SK-N-SH (cell line): ENCODE measurements at regions of chr18 and their contacts with region 1.

Region 1: DNA sequence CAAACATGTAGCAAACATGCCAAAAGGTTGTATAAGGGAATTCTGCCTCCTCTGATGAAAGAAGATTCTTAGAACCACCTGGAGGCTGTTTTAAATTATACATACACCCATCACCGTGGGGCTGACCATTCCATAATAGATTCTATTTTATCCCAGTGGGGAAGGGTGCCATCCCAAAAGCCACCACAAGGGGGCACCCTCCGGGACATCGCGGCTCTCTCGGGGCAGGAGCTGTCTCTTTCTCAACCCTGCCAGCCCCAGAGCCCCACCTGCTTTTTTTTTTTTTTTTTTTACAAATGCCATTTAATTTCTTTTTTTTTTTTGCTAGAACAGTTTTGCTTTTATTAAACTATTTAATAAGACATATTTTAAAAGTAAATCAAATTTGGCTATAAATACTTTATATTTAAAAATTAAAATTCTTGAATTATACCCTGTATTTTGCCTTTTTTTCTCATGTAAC is 8.6 kb upstream of the MTCL1 start:
- DNase-seq: peak; percentile 85
- H3K4me3 ChIP-seq: no peak overlapping the region; a peak in 1 of 4 replicates
- H3K27ac ChIP-seq: no peak overlapping the region
- H3K4me1 ChIP-seq: peaks cover 4 to 9% of the 10 kb centered on the region in 2 experiments; a peak in 2 of 4 replicates
- H3K27me3 ChIP-seq: no peaks in the 10 kb centered on the region
- CTCF ChIP-seq: peak; percentile 94
- EP300 ChIP-seq: no peak
- RAD21 ChIP-seq: peak; percentile 81

Region 2: GRCh38 chr18:8654503-8655451 is 42.0 kb before region 1 on chr18:
- CTCF ChIA-PET with region 1: interaction called, 29 read pairs
- POLR2A ChIA-PET with region 1: no interaction called
- DNase-seq: peak; percentile 51
- H3K4me3 ChIP-seq: no peak overlapping the region; a peak in 1 of 4 replicates
- H3K27ac ChIP-seq: no peak overlapping the region
- H3K4me1 ChIP-seq: peaks cover 0 to 14% of the 10 kb centered on the region in 2 experiments; a peak in 1 of 4 replicates
- H3K27me3 ChIP-seq: no peaks in the 10 kb centered on the region
- CTCF ChIP-seq: peak; percentile 78
- EP300 ChIP-seq: no peak
- RAD21 ChIP-seq: peak; percentile 86

Region 3: GRCh38 chr18:8661754-8662569 is 34.8 kb before region 1 on chr18:
- CTCF ChIA-PET with region 1: interaction called, 11 read pairs
- POLR2A ChIA-PET with region 1: no interaction called
- DNase-seq: peak; percentile 60
- H3K4me3 ChIP-seq: no peak overlapping the region
- H3K27ac ChIP-seq: no peak overlapping the region
- H3K4me1 ChIP-seq: peaks cover 15 to 19% of the 10 kb centered on the region in 2 experiments; a peak in 2 of 4 replicates
- H3K27me3 ChIP-seq: no peaks in the 10 kb centered on the region
- CTCF ChIP-seq: no peak
- EP300 ChIP-seq: no peak
- RAD21 ChIP-seq: no peak

Region 4: GRCh38 chr18:8673256-8674209 is 23.2 kb before region 1 on chr18:
- CTCF ChIA-PET with region 1: interaction called, 11 read pairs
- POLR2A ChIA-PET with region 1: no interaction called
- DNase-seq: no peak
- H3K4me3 ChIP-seq: no peak overlapping the region
- H3K27ac ChIP-seq: no peak overlapping the region
- H3K4me1 ChIP-seq: no peaks in the 10 kb centered on the region
- H3K27me3 ChIP-seq: no peaks in the 10 kb centered on the region
- CTCF ChIP-seq: no peak
- EP300 ChIP-seq: no peak
- RAD21 ChIP-seq: no peak

Region 5: GRCh38 chr18:8685141-8685913 is 11.5 kb before region 1 on chr18:
- CTCF ChIA-PET with region 1: interaction called, 32 read pairs
- POLR2A ChIA-PET with region 1: no interaction called
- DNase-seq: no peak
- H3K4me3 ChIP-seq: no peak overlapping the region
- H3K27ac ChIP-seq: no peak overlapping the region
- H3K4me1 ChIP-seq: no peaks in the 10 kb centered on the region
- H3K27me3 ChIP-seq: no peaks in the 10 kb centered on the region
- CTCF ChIP-seq: no peak
- EP300 ChIP-seq: no peak
- RAD21 ChIP-seq: no peak